ENCODE measurements at regions of chr10 and their contacts with region 1.

Region 1: DNA sequence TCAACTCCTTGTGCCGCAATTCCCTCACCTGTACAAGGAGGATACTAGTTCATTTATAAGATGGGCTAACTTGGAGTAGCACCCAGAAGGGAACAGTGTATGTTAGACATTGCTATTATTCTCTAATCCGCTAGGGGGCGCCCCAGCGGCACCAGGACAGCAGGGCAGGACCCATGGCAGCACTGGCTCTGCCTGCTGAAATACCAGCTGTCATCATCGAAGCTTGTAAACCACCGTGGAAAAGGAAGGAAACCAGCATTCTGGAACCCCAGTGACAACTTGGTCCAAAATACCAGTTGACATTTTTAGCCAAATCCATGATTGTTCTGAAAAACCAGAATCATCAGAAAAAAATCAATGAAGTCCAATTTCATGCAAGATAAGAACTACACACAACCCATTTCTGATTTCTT is 134.4 kb downstream of the ITGA8 start:
- DNase-seq: peak; percentile 20
- H3K4me3 ChIP-seq: no peak overlapping the region
- H3K27ac ChIP-seq: no peak overlapping the region
- H3K4me1 ChIP-seq: no peaks in the 10 kb centered on the region
- H3K27me3 ChIP-seq: no peaks in the 10 kb centered on the region
- CTCF ChIP-seq: peak; percentile 64 to 65

Region 2: DNA sequence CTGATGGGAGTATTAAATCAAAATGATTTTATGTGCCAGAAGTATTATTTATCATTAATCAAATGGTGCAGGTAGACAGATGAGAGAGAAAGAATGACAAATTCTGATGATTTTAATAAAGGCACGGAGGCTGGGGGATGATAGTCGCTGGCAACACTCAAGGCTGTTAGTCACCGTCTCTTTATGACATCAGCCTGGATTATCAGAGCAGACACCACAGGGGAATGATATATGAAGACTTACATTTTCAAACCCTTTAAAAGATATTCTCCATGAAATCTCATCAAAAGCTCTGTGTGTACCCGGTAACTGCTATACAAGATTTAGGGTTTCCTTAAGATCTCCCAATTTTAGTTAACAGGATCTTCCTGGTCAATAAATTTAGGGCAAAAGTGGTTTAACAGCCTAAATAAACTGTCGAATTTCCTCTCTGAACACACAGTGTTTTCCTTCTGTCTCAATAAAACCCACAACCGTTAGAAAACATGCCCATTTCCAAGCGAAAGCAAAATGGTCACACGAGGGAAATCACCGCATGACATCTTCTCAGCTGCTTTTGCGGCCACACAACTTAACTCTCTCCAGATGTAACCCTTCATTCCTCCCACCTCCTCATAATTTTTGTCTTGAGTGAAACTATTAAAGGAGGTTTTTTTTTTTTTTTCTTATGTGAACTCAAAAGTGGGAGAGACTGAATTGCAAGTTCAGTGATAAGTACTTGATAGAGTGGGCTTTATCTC is 81.0 kb before region 1 on chr10:
- CTCF ChIA-PET with region 1: no interaction called
- dilution Hi-C with region 1: no loop called
- in situ Hi-C with region 1: no loop called
- intact Hi-C with region 1: no loop called
- DNase-seq: no peak
- H3K4me3 ChIP-seq: no peak overlapping the region
- H3K27ac ChIP-seq: no peak overlapping the region
- H3K4me1 ChIP-seq: no peaks in the 10 kb centered on the region
- H3K27me3 ChIP-seq: no peaks in the 10 kb centered on the region
- CTCF ChIP-seq: no peak

Region 3: GRCh38 chr10:15725603-15726002 is 140.3 kb after region 1 on chr10:
- CTCF ChIA-PET with region 1: no interaction called
- dilution Hi-C with region 1: no loop called
- in situ Hi-C with region 1: no loop called
- intact Hi-C with region 1: loop called (anchors 5 kb)
- DNase-seq: peak; percentile 32
- H3K4me3 ChIP-seq: no peak overlapping the region
- H3K27ac ChIP-seq: no peak overlapping the region
- H3K4me1 ChIP-seq: no peaks in the 10 kb centered on the region
- H3K27me3 ChIP-seq: peaks cover 4% of the 10 kb centered on the region
- CTCF ChIP-seq: peak; percentile 43 to 71

Measured in mammary epithelial cell (primary cell).